ENCODE measurements at regions of chr18 and their contacts with region 1.

Region 1: GRCh38 chr18:13520306-13520705 is 206.1 kb downstream of the FAM210A start:
- DNase-seq: peak; percentile 83 to 89
- ATAC-seq: peak; percentile 95 to 96
- H3K4me3 ChIP-seq: no peak overlapping the region
- H3K27ac ChIP-seq: peak overlapping the region; percentile 73 to 91 (median 83)
- H3K4me1 ChIP-seq: peaks cover 45 to 56% of the 10 kb centered on the region in 2 donors
- H3K27me3 ChIP-seq: no peaks in the 10 kb centered on the region
- CTCF ChIP-seq: no peak
- POLR2A ChIP-seq: peak in 1 of 2 donors; percentile 47

Region 2: DNA sequence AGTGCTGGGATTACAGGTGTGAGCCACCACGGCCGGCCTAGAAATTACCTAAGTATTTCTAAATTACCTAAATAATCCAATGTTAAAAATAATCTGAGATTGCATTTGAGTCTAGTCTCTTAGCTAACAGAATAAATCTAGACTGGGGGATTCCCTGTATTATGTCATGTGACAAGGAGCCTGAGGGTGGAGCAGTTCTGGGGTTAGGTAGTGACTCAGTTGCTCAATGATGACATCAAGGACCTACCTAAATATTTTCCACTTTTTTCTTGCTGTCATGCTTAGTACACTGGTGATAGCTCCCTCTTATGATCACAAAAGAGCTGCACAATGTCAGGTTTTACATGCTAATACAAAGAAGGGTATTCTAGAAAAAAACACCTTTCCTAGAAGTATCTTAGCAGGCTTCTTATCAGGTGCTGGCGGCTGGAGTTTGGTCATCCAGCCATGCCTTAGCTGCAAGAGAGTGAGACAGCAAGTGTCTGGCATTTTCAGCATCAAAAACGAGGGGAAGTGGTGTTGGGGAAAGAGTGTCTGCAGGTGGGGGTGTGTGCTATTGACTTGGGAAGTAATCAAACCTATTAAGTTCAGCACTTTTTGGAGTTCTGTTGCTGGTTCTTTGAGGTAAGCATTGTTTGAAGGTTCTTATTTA is 546.6 kb before region 1 on chr18:
- in situ Hi-C with region 1: no loop called
- intact Hi-C with region 1: no loop called
- DNase-seq: no peak
- ATAC-seq: no peak
- H3K4me3 ChIP-seq: no peak overlapping the region
- H3K27ac ChIP-seq: no peak overlapping the region
- H3K4me1 ChIP-seq: no peaks in the 10 kb centered on the region
- H3K27me3 ChIP-seq: no peaks in the 10 kb centered on the region
- CTCF ChIP-seq: no peak
- POLR2A ChIP-seq: no peak

Region 3: GRCh38 chr18:13221869-13222855 is 298.1 kb before region 1 on chr18:
- in situ Hi-C with region 1: loop called in 3 of 4 experiments (anchors 5 to 25 kb)
- intact Hi-C with region 1: no loop called
- DNase-seq: peak; percentile 30 to 58
- ATAC-seq: peak in 1 of 2 donors; percentile 42
- H3K4me3 ChIP-seq: peak overlapping the region; percentile 13 to 31 (median 25)
- H3K27ac ChIP-seq: peak overlapping the region; percentile 80 to 94 (median 82)
- H3K4me1 ChIP-seq: peaks cover 55 to 61% of the 10 kb centered on the region in 2 donors
- H3K27me3 ChIP-seq: no peaks in the 10 kb centered on the region
- CTCF ChIP-seq: no peak
- POLR2A ChIP-seq: peak in 1 of 2 donors; percentile 16

Region 4: GRCh38 chr18:13321923-13322322 is 198.4 kb before region 1 on chr18:
- in situ Hi-C with region 1: no loop called
- intact Hi-C with region 1: no loop called
- DNase-seq: no peak
- ATAC-seq: no peak
- H3K4me3 ChIP-seq: no peak overlapping the region
- H3K27ac ChIP-seq: no peak overlapping the region
- H3K4me1 ChIP-seq: peaks cover 7 to 10% of the 10 kb centered on the region in 2 donors
- H3K27me3 ChIP-seq: no peaks in the 10 kb centered on the region
- CTCF ChIP-seq: no peak
- POLR2A ChIP-seq: no peak

Region 5: GRCh38 chr18:13381944-13382365 is 138.4 kb before region 1 on chr18:
- in situ Hi-C with region 1: loop called in 1 of 4 experiments (anchors 10 kb)
- intact Hi-C with region 1: no loop called
- DNase-seq: peak; percentile 26 to 43
- ATAC-seq: peak in 1 of 2 donors; percentile 34
- H3K4me3 ChIP-seq: peak overlapping the region in 3 of 4 donors; percentile 27 to 41 (median 31)
- H3K27ac ChIP-seq: peak overlapping the region; percentile 58 to 70 (median 68)
- H3K4me1 ChIP-seq: peaks cover 43 to 53% of the 10 kb centered on the region in 2 donors
- H3K27me3 ChIP-seq: no peaks in the 10 kb centered on the region
- CTCF ChIP-seq: no peak
- POLR2A ChIP-seq: no peak

Region 6: DNA sequence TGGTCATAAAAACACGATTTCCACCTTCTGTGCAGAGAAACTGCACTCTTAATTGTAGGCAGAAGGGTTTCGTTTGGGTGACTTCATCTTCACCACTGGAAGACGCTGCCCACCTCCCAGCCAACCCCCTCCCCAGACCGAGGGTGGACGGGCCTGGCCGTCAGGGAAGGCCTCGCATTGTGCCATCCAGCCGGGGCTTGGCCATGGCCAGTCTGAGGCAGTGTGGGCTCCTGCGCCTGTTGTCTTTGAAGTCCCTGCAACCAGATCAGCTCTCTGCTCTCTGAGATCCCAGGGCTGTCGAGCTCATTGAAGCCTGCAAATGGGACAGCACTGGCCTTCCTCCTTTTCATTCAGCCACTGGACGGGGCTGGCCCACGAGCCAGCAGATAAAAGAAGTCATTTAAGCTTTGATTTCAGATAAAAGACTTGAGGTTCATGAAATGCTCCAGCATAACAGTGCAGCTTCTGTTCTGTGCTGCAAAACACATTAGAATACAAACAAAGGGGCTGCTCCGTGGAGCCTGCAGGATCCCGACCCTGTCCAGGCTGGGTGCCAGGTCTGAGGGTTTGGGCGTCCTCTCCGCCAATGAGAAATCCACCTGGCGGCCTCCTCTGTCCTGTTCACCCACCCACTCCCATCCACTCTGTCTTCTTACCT is 48.2 kb before region 1 on chr18:
- in situ Hi-C with region 1: no loop called
- intact Hi-C with region 1: no loop called
- DNase-seq: no peak
- ATAC-seq: no peak
- H3K4me3 ChIP-seq: no peak overlapping the region
- H3K27ac ChIP-seq: peak overlapping the region in 1 of 4 donors; percentile 6
- H3K4me1 ChIP-seq: no peaks in the 10 kb centered on the region
- H3K27me3 ChIP-seq: no peaks in the 10 kb centered on the region
- CTCF ChIP-seq: no peak
- POLR2A ChIP-seq: no peak

Region 7: DNA sequence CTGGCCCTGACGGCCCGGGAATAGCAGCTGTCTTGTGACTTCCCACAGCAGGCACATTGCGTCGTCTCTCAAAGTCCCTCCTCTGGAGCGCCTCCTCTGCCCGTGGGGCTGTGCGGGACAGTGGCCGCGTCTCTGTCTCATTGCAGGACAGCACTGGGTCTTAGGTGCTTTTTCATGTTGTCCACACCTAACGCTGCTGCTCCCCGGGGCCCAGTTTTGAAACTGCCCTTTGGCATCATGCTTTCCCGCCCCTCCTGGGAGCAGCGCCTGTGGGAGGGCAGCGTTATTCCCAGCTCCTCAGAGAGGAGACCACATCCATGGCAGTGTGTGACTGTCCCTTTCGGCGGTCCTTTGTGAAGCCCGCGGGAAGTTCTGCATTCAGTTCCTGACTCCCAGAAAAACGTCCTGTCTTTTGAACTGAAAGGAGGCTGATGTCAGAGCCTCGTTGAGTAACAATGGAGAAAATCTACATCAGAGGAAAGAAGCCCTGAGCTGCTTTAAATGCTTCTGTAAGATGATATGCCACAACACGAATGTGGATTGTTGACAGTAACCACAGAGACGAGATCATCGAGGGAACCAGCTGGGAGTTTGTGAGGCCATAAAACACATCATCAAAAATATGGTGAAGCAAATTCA is 20.0 kb before region 1 on chr18:
- in situ Hi-C with region 1: no loop called
- intact Hi-C with region 1: loop called (anchors 1 kb)
- DNase-seq: peak; percentile 49 to 65
- ATAC-seq: peak; percentile 84 to 93
- H3K4me3 ChIP-seq: peak overlapping the region; percentile 45 to 55 (median 52)
- H3K27ac ChIP-seq: peak overlapping the region; percentile 85 to 96 (median 88)
- H3K4me1 ChIP-seq: peaks cover 35 to 43% of the 10 kb centered on the region in 2 donors
- H3K27me3 ChIP-seq: no peaks in the 10 kb centered on the region
- CTCF ChIP-seq: peak in 1 of 5 experiments; percentile 18
- POLR2A ChIP-seq: peak; percentile 56 to 64